ENCODE measurements at regions of chr7 and their contacts with region 1.

Region 1: GRCh38 chr7:4641667-4642467 is 40.2 kb upstream of the FOXK1 start:
- DNase-seq: no peak
- H3K4me3 ChIP-seq: peak overlapping the region; percentile 60
- H3K27ac ChIP-seq: peak overlapping the region; percentile 86
- H3K4me1 ChIP-seq: peaks cover 16% of the 10 kb centered on the region
- H3K27me3 ChIP-seq: no peaks in the 10 kb centered on the region
- CTCF ChIP-seq: peak in 2 of 3 experiments; percentile 20 to 41
- POLR2A ChIP-seq: peak in 1 of 2 donors; percentile 75

Region 2: DNA sequence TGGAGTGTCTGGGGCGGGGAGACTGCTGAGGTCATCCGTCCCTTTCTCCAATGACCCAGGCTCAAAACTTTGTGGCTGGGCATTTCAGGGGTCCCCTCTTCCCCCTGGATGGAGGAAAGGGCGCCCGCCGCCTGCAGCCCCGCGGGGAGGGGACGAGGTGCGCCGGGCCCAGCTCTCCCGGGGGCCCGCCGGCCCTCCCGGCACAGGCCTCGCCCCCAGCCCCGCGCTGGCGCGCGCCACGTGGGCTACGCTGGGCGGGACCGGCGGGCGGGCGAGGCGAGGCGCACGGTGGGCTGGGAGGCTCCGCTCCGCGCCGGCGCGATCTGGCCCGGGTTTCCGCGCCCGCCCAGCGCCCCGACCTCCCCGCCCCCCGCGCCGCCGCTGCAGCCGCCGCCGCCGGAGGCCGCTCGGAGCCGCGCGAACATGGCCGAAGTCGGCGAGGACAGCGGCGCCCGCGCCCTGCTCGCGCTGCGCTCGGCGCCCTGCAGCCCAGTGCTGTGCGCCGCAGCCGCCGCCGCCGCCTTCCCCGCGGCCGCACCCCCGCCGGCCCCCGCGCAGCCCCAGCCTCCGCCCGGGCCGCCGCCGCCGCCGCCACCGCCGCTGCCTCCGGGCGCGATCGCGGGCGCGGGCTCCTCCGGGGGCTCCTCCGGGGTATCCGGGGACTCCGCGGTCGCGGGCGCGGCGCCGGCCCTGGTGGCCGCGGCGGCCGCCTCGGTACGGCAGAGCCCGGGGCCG is 40.2 kb after region 1 on chr7 and contains the start of gene FOXK1:
- intact Hi-C with region 1: loop called (anchors 1 kb)
- DNase-seq: no peak
- H3K4me3 ChIP-seq: peak within 1 kb of the TSS; percentile 90 to 97
- H3K27ac ChIP-seq: peak within 1 kb of the TSS; percentile 98
- H3K4me1 ChIP-seq: peaks cover 36% of the 10 kb centered on the region
- H3K27me3 ChIP-seq: no peaks in the 10 kb centered on the region
- CTCF ChIP-seq: no peak
- POLR2A ChIP-seq: peak in 1 of 2 donors; percentile 62
- total RNA-seq, gene FOXK1: 28.5 TPM

Measured in vagina (tissue), 2 donors.